ENCODE measurements at regions of chr1 and their contacts with region 1.

Region 1: DNA sequence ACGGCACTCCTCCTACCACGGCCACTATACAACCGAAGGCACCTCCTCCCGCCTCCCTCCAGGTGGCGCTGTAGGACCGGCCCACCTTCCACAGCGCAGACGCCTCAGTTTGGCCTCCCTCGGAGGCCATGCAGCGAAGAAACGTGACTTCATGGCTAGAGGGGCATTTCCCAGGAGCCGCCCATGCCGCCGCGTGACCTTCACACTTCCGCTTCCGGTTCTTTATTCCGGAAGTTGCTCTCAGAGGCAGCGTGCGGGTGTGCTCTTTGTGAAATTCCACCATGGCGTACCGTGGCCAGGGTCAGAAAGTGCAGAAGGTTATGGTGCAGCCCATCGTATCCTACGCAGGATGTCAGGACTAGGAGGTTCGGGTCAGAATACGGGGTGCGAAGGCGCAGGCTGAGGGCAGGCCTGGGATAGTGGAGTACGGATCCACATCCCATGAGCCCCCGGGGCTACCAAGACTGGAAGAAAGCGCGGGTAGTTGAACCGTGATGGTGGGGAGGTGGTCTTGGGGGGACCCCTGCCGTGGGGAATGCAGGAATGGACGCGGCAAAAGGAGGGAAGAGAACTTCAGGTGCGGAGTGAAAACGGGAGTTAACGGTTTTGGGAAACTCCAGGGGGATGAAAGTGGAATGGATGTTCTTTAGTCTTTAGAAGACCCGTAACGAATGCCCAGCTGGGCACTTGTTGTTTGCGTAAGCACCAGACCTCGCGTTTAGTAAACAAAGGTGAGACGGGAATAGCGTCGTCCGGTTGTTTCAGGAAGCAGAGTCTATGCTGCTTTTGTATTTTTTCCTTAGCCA is at the start of gene SNRPE:
- DNase-seq: peak; percentile 91 to 96
- H3K4me3 ChIP-seq: peak within 1 kb of the TSS; percentile 85
- H3K27ac ChIP-seq: peak within 1 kb of the TSS; percentile 66
- H3K4me1 ChIP-seq: peaks cover 21% of the 10 kb centered on the region
- H3K27me3 ChIP-seq: no peaks in the 10 kb centered on the region
- CTCF ChIP-seq: peak; percentile 95
- total RNA-seq, gene SNRPE: 201 and 218 TPM in 2 replicates

Region 2: DNA sequence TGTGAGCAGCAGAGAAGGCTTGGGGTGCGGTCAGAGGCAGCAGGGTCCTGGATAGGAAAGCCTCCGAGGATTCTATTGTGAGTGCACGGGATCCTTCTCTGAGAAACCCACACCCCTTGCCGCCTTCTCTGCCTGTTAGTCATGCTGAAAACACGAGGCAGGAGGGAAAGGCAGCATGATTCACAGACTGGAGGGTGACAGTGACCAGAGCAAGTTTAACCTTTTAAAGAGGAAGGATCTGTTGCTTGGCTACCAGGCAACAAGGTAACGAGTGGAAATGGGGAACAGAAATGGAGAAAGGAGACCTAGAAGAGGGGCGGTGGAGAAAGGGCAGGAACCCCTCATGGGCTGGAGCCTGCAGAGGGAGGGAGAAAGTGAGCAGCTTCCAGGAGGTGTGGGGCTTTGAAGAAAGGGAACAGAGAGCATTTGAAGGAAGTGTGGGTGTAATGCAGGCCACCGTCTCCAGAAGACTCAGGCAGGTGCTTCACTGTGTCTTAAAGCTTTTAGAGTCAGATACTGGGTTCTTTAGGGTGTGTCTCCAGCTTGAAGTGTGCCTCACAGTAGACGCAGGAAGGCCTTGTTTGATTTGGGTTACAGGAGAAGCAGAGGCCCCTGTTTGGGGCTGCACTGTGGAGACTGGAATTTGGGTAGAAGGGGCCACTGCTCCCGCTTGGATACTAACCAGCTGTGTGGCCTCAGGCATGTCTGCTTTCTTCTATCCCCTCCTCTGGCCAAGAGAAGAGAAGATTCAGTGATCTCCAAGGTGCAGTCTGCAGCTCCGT is 348.6 kb before region 1 on chr1:
- CTCF ChIA-PET with region 1: no interaction called
- POLR2A ChIA-PET with region 1: no interaction called
- intact Hi-C with region 1: loop called (anchors 2 kb)
- DNase-seq: peak; percentile 86 to 95
- H3K4me3 ChIP-seq: peak overlapping the region; percentile 49; the same call in 1 of the 2 replicates
- H3K27ac ChIP-seq: peak overlapping the region; percentile 97
- H3K4me1 ChIP-seq: peaks cover 83% of the 10 kb centered on the region
- H3K27me3 ChIP-seq: no peaks in the 10 kb centered on the region
- CTCF ChIP-seq: no peak

Region 3: GRCh38 chr1:204072931-204073836 is 211.6 kb after region 1 on chr1 and contains the start of gene SOX13:
- CTCF ChIA-PET with region 1: no interaction called
- POLR2A ChIA-PET with region 1: interaction called, 3 read pairs
- intact Hi-C with region 1: loop called (anchors 1 kb)
- DNase-seq: peak; percentile 63 to 83
- H3K4me3 ChIP-seq: peak within 1 kb of the TSS; percentile 96
- H3K27ac ChIP-seq: peak within 1 kb of the TSS; percentile 52
- H3K4me1 ChIP-seq: peaks cover 30% of the 10 kb centered on the region
- H3K27me3 ChIP-seq: no peaks in the 10 kb centered on the region
- CTCF ChIP-seq: peak; percentile 48
- total RNA-seq, gene SOX13: 89.9 and 102 TPM in 2 replicates

Region 4: GRCh38 chr1:204198151-204198994 is 336.8 kb after region 1 on chr1:
- CTCF ChIA-PET with region 1: interaction called, 5 read pairs
- POLR2A ChIA-PET with region 1: interaction called, 3 read pairs
- intact Hi-C with region 1: loop called (anchors 2 kb)
- DNase-seq: peak; percentile 90 to 95
- H3K4me3 ChIP-seq: peak overlapping the region; percentile 32; the same call in 1 of the 2 replicates
- H3K27ac ChIP-seq: peak overlapping the region; percentile 82
- H3K4me1 ChIP-seq: peaks cover 44% of the 10 kb centered on the region
- H3K27me3 ChIP-seq: no peaks in the 10 kb centered on the region
- CTCF ChIP-seq: peak; percentile 54

Region 5: GRCh38 chr1:204254031-204254661 is 392.6 kb after region 1 on chr1:
- CTCF ChIA-PET with region 1: no interaction called
- POLR2A ChIA-PET with region 1: no interaction called
- intact Hi-C with region 1: no loop called
- DNase-seq: peak; percentile 34 to 90
- H3K4me3 ChIP-seq: no peak overlapping the region
- H3K27ac ChIP-seq: no peak overlapping the region
- H3K4me1 ChIP-seq: peaks cover 29% of the 10 kb centered on the region
- H3K27me3 ChIP-seq: no peaks in the 10 kb centered on the region
- CTCF ChIP-seq: no peak

Region 6: DNA sequence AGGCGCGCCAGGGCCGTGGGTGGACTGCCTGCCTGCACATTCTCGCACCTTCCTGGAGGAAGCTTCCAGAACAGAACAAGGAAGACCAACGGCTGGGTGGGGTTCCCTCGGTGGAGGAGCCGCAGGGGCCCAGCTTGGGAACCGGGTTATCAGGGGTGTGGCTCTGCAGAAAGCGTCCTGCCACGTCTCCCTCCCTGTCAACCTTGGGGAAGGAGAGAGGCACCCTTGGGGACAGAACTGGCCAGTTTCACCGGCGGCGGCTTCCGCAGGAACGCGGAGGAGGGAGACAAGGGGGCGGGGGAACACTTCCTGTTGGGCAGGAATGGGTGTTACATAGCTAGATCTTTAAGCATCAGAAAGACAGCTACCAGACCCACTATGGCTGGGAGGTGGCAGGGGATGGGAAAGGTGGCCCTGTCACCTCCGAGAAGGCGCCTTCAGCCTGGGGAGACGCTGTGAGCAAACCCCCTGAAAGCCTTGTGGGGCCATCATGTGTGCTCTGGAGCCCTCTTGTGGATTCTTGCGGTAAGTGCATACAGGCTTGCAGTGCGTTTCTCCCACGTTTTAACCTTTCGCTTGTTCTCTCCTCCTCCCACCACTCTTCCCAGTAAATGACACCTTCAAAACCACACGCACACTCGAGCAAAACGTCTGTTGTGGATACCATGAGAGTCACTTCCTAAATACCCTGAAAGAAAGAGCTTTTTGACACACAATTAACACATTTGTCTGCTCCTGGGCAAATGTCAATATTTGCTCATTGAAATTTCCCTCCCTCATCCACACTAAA is 501.9 kb after region 1 on chr1:
- CTCF ChIA-PET with region 1: no interaction called
- POLR2A ChIA-PET with region 1: no interaction called
- intact Hi-C with region 1: loop called (anchors 1 kb)
- DNase-seq: peak; percentile 34 to 54
- H3K4me3 ChIP-seq: no peak overlapping the region
- H3K27ac ChIP-seq: no peak overlapping the region
- H3K4me1 ChIP-seq: 0 out of 2 replicates have a peak, but pooled peaks cover 3% of the 10 kb centered on the region
- H3K27me3 ChIP-seq: no peaks in the 10 kb centered on the region
- CTCF ChIP-seq: peak; percentile 98